ENCODE measurements at regions of chr10 and their contacts with region 1.

Region 1: GRCh38 chr10:86376852-86377796 is 10.5 kb upstream of the GRID1 start:
- H3K4me3 Mint-ChIP-seq: no peak overlapping the region
- H3K27ac Mint-ChIP-seq: no peak overlapping the region
- H3K4me1 Mint-ChIP-seq: no peaks in the 10 kb centered on the region
- H3K27me3 Mint-ChIP-seq: peaks cover 59% of the 10 kb centered on the region

Region 2: GRCh38 chr10:84537447-84537931 is 1839.6 kb before region 1 on chr10:
- intact Hi-C with region 1: loop called (anchors 10 kb)
- H3K4me3 Mint-ChIP-seq: no peak overlapping the region
- H3K27ac Mint-ChIP-seq: no peak overlapping the region
- H3K4me1 Mint-ChIP-seq: peaks cover 15% of the 10 kb centered on the region
- H3K27me3 Mint-ChIP-seq: peaks cover 31% of the 10 kb centered on the region

Region 3: GRCh38 chr10:84938117-84938905 is 1438.8 kb before region 1 on chr10:
- intact Hi-C with region 1: loop called (anchors 10 kb)
- H3K4me3 Mint-ChIP-seq: no peak overlapping the region
- H3K27ac Mint-ChIP-seq: no peak overlapping the region
- H3K4me1 Mint-ChIP-seq: no peaks in the 10 kb centered on the region
- H3K27me3 Mint-ChIP-seq: no peaks in the 10 kb centered on the region

Region 4: GRCh38 chr10:85995791-85996190 is 381.3 kb before region 1 on chr10:
- intact Hi-C with region 1: loop called (anchors 10 kb)
- H3K4me3 Mint-ChIP-seq: no peak overlapping the region
- H3K27ac Mint-ChIP-seq: no peak overlapping the region
- H3K4me1 Mint-ChIP-seq: no peaks in the 10 kb centered on the region
- H3K27me3 Mint-ChIP-seq: peaks cover 4% of the 10 kb centered on the region

Region 5: GRCh38 chr10:86100581-86101061 is 276.5 kb before region 1 on chr10:
- intact Hi-C with region 1: loop called (anchors 1 kb)
- H3K4me3 Mint-ChIP-seq: no peak overlapping the region
- H3K27ac Mint-ChIP-seq: no peak overlapping the region
- H3K4me1 Mint-ChIP-seq: no peaks in the 10 kb centered on the region
- H3K27me3 Mint-ChIP-seq: peaks cover 2% of the 10 kb centered on the region

Region 6: DNA sequence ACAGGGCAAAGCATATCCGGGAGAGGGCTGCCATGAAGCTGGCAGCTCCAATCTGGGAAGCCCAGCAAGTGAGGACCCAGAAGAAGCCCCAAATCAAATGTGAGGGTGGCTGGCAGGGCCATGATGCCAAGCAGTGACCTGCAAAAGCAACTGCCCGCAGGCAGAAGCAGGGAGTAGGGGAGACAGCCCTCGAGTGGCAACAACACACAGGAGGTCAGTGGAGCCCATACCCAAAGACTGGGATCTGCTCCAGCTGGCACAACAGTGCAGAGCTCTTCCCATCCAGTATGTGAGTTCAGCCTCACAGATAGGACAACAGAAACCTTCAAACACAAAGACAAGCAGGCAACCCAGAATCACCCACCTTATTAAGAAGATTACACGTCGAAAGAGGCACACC is 55.6 kb before region 1 on chr10:
- intact Hi-C with region 1: no loop called
- H3K4me3 Mint-ChIP-seq: no peak overlapping the region
- H3K27ac Mint-ChIP-seq: no peak overlapping the region
- H3K4me1 Mint-ChIP-seq: no peaks in the 10 kb centered on the region
- H3K27me3 Mint-ChIP-seq: peaks cover 17% of the 10 kb centered on the region

Measured in dendritic cell treated with granulocyte-macrophage colony-stimulating factor and Interleukin-4, amounts not matched to agents 40 ng/mL and 50 ng/mL, for 4 days (primary cell).